Activated B cell treated with CpG ODN at 0.5 μM for 24 hours (primary cell): ENCODE measurements at regions of chr2 and their contacts with region 1.

Region 1: GRCh38 chr2:27086090-27086723 is 365 bp upstream of the KHK start:
- DNase-seq: peak; percentile 99
- ATAC-seq: peak; percentile 92
- H3K4me3 Mint-ChIP-seq: peak overlapping the region; percentile 87
- H3K27ac Mint-ChIP-seq: peak overlapping the region; percentile 86
- H3K4me1 Mint-ChIP-seq: peaks cover 18% of the 10 kb centered on the region
- H3K27me3 Mint-ChIP-seq: no peaks in the 10 kb centered on the region
- CTCF ChIP-seq: peak; percentile 44

Region 2: DNA sequence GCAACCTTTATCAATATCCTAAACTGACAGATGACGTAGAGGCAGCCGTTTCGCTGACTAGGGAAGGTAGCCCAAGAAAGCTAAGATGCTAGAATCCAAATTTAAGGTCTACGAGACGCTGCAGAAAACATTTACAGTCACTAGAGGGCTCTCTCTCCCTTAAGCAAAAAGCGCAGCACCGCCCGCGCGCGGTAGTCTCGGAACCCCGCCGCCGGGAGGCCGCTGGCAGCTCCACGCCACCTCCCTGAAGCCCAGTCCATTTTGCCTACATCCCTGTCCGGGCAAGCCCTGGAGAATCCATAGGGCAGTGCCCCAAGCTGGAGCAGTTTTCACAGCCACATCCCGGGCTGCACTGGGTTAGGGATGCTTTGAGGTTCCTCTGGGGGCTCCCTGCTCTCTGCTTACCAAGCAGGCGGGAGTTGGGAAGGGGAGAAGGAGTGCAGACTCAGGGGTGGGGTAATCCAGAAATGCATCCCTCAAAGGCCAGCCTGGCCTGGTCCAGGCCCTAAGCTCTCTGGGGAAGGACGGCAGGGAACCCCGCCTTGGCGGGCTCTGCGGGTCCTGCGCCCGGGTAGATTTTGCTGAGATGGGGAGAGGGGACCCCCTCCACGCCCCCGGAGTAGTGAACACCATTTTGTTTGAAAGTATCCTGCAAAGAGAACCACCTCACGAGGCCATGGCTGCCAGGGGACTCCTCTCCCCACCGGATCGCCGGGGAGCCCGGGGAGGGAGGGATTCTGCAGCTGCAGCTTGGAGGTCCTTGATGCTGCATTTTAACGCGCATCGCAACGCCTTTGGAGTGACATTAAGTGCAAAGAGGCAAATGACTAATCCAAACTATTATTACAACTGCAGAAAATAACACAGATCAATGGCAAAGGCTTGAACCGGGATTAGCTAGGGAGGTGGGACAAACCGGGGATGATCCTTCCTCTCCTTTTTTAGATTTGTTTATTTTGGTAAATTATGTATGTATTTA is 239.6 kb before region 1 on chr2:
- CTCF ChIA-PET with region 1: no interaction called
- POLR2A ChIA-PET with region 1: no interaction called
- intact Hi-C with region 1: loop called (anchors 5 kb)
- DNase-seq: peak; percentile 54
- ATAC-seq: peak; percentile 71
- H3K4me3 Mint-ChIP-seq: peak overlapping the region; percentile 77
- H3K27ac Mint-ChIP-seq: no peak overlapping the region
- H3K4me1 Mint-ChIP-seq: peaks cover 20% of the 10 kb centered on the region
- H3K27me3 Mint-ChIP-seq: peaks cover 47% of the 10 kb centered on the region
- CTCF ChIP-seq: no peak

Region 3: GRCh38 chr2:26970244-26970920 is 115.8 kb before region 1 on chr2 and contains the start of gene MAPRE3:
- CTCF ChIA-PET with region 1: interaction called, 3 read pairs
- POLR2A ChIA-PET with region 1: no interaction called
- intact Hi-C with region 1: loop called (anchors 1 kb)
- DNase-seq: peak; percentile 88
- ATAC-seq: peak; percentile 93
- H3K4me3 Mint-ChIP-seq: peak within 1 kb of the TSS; percentile 85
- H3K27ac Mint-ChIP-seq: peak within 1 kb of the TSS; percentile 59
- H3K4me1 Mint-ChIP-seq: peaks cover 21% of the 10 kb centered on the region
- H3K27me3 Mint-ChIP-seq: peaks cover 40% of the 10 kb centered on the region
- CTCF ChIP-seq: no peak
- total RNA-seq, gene MAPRE3: 4.6 and 6.3 TPM in 2 replicates

Region 4: DNA sequence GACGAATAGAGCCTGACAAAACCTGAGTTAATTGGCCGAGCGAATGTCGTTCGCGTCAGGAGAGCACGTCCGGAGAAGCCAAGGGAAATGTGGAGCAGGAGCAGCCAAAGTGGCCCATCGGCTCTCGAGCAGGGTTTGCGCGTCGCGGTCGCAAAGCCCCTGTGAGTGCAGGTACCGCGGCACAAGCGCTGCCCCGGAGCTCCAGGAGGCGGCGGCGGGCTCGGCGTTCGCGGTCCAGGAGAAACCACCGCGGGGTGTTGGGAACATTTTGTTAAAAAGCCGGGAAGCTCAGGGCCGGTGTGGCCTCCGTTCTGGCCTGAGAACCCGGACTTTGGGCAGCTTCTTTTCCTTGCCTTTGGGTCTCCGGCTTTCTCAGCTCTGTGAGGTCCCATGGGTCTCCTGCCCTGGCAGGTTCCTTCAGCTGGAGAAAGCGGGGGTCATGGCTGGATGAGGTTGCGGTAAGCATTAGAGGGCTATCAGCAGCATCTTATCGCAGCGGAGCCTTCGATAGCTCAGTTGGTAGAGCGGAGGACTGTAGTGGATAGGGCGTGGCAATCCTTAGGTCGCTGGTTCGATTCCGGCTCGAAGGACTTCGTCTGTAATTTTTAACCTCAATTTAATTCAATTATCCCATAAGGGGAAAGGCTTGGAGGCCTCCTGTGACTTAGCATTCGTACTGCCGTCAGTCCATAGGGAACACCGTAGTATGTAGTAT is 35.8 kb before region 1 on chr2:
- CTCF ChIA-PET with region 1: interaction called, 3 read pairs
- POLR2A ChIA-PET with region 1: interaction called, 53 read pairs
- intact Hi-C with region 1: loop called (anchors 1 kb)
- DNase-seq: peak; percentile 91
- ATAC-seq: peak; percentile 60
- H3K4me3 Mint-ChIP-seq: peak overlapping the region; percentile 97
- H3K27ac Mint-ChIP-seq: peak overlapping the region; percentile 100
- H3K4me1 Mint-ChIP-seq: peaks cover 19% of the 10 kb centered on the region
- H3K27me3 Mint-ChIP-seq: peaks cover 6% of the 10 kb centered on the region
- CTCF ChIP-seq: no peak

Region 5: DNA sequence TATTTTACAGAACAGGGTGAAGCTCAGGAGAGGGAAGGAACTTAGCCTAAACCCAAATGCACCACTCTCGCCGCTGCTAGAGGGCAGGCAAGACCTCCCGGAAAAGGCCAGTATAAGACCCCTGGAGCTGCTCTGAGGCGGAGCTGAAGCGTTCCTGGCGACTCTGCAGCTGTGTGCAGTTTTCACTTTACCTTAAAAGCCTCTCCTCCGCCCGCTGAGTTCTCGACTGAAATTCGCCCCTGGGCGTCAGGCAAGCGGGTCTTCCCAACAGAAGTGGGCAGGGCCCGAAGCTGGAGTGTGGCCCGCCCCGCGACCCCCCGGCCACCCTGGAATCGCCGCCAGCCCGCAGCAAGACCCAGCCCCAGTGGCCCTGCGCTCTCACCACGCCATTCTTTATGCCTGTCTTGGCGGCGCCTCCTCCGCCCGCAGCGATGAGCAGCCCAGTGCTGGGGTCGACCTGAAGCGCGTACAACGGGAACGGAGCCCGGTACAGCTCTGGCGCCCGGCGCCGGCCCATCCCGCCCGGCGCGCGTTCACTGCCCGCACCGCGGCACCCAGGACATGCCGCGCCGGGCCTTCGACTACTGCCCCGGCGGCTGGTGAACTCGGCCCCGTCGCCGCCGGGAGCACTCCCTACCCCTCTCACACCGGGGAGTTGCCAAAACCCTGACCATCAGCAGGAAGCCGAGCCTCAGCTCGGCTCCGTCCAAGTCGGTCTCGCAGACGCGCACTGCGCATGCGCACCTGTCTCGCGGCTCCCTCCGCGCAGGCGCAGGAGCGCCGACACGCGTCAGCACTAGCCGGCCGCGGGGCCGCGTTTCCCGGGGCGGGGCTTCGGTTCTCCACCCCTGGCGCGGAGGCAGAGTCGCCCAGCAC is 47.9 kb after region 1 on chr2 and contains the start of gene PREB:
- CTCF ChIA-PET with region 1: no interaction called
- POLR2A ChIA-PET with region 1: interaction called, 8 read pairs
- intact Hi-C with region 1: loop called (anchors 1 kb)
- DNase-seq: peak; percentile 99
- ATAC-seq: peak; percentile 99
- H3K4me3 Mint-ChIP-seq: peak within 1 kb of the TSS; percentile 95
- H3K27ac Mint-ChIP-seq: peak within 1 kb of the TSS; percentile 90
- H3K4me1 Mint-ChIP-seq: peaks cover 20% of the 10 kb centered on the region
- H3K27me3 Mint-ChIP-seq: no peaks in the 10 kb centered on the region
- CTCF ChIP-seq: no peak
- total RNA-seq, gene PREB: 38.6 and 38.7 TPM in 2 replicates

Region 6: DNA sequence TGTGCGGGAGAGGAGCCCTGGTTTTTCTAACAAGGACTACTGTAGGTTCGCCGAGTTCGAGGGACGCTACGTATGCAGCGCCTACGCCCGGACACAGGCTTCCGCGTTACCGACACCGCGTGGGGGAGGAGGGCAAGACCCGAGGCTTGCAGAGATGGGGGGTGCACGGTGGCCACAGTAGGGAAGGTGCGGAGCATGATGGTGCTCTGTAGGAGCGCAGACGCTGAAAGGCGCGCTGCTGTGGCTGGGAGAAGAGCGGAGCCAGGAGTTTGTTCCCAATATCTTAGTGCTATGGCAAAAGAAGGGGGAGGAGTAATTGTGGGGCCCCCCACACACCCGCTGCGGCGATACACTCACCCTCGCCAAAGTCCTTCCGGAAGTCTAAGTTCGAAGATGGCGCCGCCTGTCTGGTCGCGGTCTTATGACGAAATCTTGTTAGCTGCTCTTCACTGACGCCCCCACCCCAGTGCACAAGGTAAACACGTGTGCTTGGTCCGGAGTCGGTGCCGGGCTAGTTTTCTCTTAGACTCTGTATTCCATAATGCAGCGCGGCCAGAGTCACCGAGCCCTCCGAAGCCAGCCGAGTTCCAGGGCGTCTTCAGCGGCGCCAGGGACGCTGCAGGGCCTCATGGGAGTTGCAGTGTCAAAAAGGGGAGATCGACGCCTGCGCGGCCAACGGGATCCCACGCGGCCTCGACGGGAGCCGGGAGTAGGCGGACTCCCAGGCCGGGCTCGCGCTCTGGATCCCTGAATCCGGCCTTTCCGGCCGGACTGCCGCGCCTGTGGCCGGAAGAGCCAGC is 270.4 kb after region 1 on chr2 and contains the start of gene GTF3C2:
- CTCF ChIA-PET with region 1: no interaction called
- POLR2A ChIA-PET with region 1: no interaction called
- intact Hi-C with region 1: loop called (anchors 2 kb)
- DNase-seq: peak; percentile 87
- ATAC-seq: peak; percentile 83
- H3K4me3 Mint-ChIP-seq: peak within 1 kb of the TSS; percentile 98
- H3K27ac Mint-ChIP-seq: peak within 1 kb of the TSS; percentile 100
- H3K4me1 Mint-ChIP-seq: peaks cover 53% of the 10 kb centered on the region
- H3K27me3 Mint-ChIP-seq: no peaks in the 10 kb centered on the region
- CTCF ChIP-seq: no peak
- total RNA-seq, gene GTF3C2: 91.7 and 119 TPM in 2 replicates